PC-3 (cell line): ENCODE measurements at regions of chr3 and their contacts with region 1.

Region 1: DNA sequence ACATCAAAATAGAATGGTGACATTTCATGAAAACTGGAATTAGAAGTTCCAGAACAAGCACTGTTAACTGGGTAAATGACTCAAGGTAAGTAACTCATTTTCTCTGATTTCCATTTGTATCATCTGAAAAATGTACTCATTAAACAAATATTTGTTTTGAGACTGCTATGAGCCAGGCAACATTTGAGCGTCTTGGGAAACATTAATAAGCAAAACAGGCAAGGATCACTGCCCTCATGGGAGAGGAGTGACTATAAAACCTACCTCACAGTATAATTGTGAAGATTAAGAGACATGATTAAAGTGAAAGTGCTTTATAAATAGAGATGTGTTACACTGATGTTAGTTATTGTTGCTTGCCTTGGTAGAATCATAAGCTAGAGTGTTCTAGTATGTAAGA is 711.8 kb upstream of the UBE2E2 start:
- DNase-seq: peak; percentile 86
- ATAC-seq: peak; percentile 96
- H3K4me3 ChIP-seq: no peak overlapping the region
- H3K27ac ChIP-seq: peak overlapping the region; percentile 71
- H3K4me1 ChIP-seq: peaks cover 30% of the 10 kb centered on the region
- H3K27me3 ChIP-seq: no peaks in the 10 kb centered on the region
- CTCF ChIP-seq: no peak

Region 2: GRCh38 chr3:22159004-22159695 is 332.2 kb before region 1 on chr3:
- CTCF ChIA-PET with region 1: no interaction called
- POLR2A ChIA-PET with region 1: interaction called, 4 read pairs
- intact Hi-C with region 1: loop called (anchors 2 kb)
- DNase-seq: peak; percentile 89
- ATAC-seq: peak; percentile 85
- H3K4me3 ChIP-seq: no peak overlapping the region
- H3K27ac ChIP-seq: peak overlapping the region; percentile 27
- H3K4me1 ChIP-seq: peaks cover 46% of the 10 kb centered on the region
- H3K27me3 ChIP-seq: no peaks in the 10 kb centered on the region
- CTCF ChIP-seq: no peak

Region 3: DNA sequence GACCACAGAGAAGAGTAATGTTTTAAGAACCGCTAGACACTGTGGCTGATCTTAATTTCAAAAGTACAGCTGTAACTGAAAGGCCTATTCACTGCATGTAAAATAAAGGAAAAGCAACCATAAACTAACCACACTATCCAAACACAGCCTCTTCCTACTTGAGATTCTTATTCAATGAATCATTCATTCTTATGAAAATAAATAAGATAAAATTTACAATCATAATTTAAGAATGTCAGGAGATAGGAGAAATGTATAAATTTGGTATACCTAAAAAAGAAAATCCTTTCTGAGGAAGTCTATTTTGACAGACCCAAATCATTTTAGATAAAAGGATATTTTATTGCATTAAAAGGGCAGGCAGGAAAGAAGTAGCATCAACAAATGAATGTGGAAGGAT is 206.8 kb before region 1 on chr3:
- CTCF ChIA-PET with region 1: no interaction called
- POLR2A ChIA-PET with region 1: no interaction called
- intact Hi-C with region 1: no loop called
- DNase-seq: peak; percentile 78
- ATAC-seq: peak; percentile 100
- H3K4me3 ChIP-seq: peak overlapping the region; percentile 33; the same call in 1 of the 2 replicates
- H3K27ac ChIP-seq: peak overlapping the region; percentile 43
- H3K4me1 ChIP-seq: peaks cover 22% of the 10 kb centered on the region
- H3K27me3 ChIP-seq: no peaks in the 10 kb centered on the region
- CTCF ChIP-seq: no peak

Region 4: DNA sequence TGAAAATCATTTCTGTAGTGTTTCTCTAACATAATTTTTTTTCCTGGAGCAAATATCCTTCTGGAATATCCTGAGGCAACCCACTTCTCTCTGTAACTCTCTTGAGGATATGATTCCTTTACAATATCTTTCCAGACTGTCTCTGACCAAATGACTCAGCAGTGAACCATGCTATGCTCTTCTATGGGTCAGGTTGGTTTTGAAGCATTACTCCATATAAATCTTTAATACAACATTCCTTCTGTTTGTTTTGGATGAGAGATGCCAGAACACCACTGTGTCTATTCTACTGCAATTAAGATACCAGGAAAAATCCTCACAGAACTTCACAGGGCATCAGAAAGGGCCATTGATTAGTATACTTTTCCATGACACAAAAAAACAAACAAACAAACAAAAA is 113.9 kb before region 1 on chr3:
- CTCF ChIA-PET with region 1: no interaction called
- POLR2A ChIA-PET with region 1: no interaction called
- intact Hi-C with region 1: loop called (anchors 2 kb)
- DNase-seq: peak; percentile 83
- ATAC-seq: peak; percentile 98
- H3K4me3 ChIP-seq: no peak overlapping the region
- H3K27ac ChIP-seq: no peak overlapping the region
- H3K4me1 ChIP-seq: peaks cover 16% of the 10 kb centered on the region
- H3K27me3 ChIP-seq: no peaks in the 10 kb centered on the region
- CTCF ChIP-seq: no peak

Region 5: GRCh38 chr3:22474706-22475445 is 16.5 kb before region 1 on chr3:
- CTCF ChIA-PET with region 1: no interaction called
- POLR2A ChIA-PET with region 1: no interaction called
- intact Hi-C with region 1: loop called (anchors 1 kb)
- DNase-seq: peak; percentile 76
- ATAC-seq: peak; percentile 70
- H3K4me3 ChIP-seq: no peak overlapping the region; the same call in 1 of the 2 replicates
- H3K27ac ChIP-seq: peak overlapping the region; percentile 81
- H3K4me1 ChIP-seq: peaks cover 22% of the 10 kb centered on the region
- H3K27me3 ChIP-seq: no peaks in the 10 kb centered on the region
- CTCF ChIP-seq: no peak